Naive thymus-derived CD4-positive, alpha-beta T cell (primary cell): ENCODE measurements at regions of chr12 and their contacts with region 1.

Region 1: GRCh38 chr12:131949431-131950181 is at the start of gene EP400:
- DNase-seq: peak; percentile 78 to 95 (median 86)
- ATAC-seq: peak; percentile 97
- H3K4me3 ChIP-seq: peak within 1 kb of the TSS; percentile 78
- H3K4me3 Mint-ChIP-seq: peak within 1 kb of the TSS; percentile 80 to 93 (median 91)
- H3K27ac ChIP-seq: peak within 1 kb of the TSS; percentile 84
- H3K27ac Mint-ChIP-seq: peak within 1 kb of the TSS; percentile 88 to 95 (median 91)
- H3K4me1 ChIP-seq: peaks cover 7 to 16% of the 10 kb centered on the region in 2 donors
- H3K4me1 Mint-ChIP-seq: peaks cover 29 to 48% (median 32%) of the 10 kb centered on the region in 7 donors
- H3K27me3 ChIP-seq: no peaks in the 10 kb centered on the region
- H3K27me3 Mint-ChIP-seq: no peaks in the 10 kb centered on the region
- total RNA-seq, gene EP400: 62.2 to 86.8 (median 82.6) TPM

Region 2: GRCh38 chr12:131608740-131609690 is 340.6 kb before region 1 on chr12:
- CTCF ChIA-PET with region 1: no interaction called
- POLR2A ChIA-PET with region 1: no interaction called
- intact Hi-C with region 1: loop called (anchors 5 to 10 kb)
- DNase-seq: peak in 8 of 9 donors; percentile 31 to 64 (median 52)
- ATAC-seq: peak; percentile 80
- H3K4me3 ChIP-seq: no peak overlapping the region
- H3K4me3 Mint-ChIP-seq: peak overlapping the region in 3 of 10 donors; percentile 13 to 49 (median 29)
- H3K27ac ChIP-seq: no peak overlapping the region
- H3K27ac Mint-ChIP-seq: peak overlapping the region in 3 of 9 donors; percentile 38 to 79 (median 72)
- H3K4me1 ChIP-seq: peaks cover 38 to 49% of the 10 kb centered on the region in 2 donors
- H3K4me1 Mint-ChIP-seq: peaks cover 28 to 55% (median 47%) of the 10 kb centered on the region in 7 donors
- H3K27me3 ChIP-seq: no peaks in the 10 kb centered on the region
- H3K27me3 Mint-ChIP-seq: peaks cover 0 to 2% (median 0%) of the 10 kb centered on the region in 5 donors

Region 3: DNA sequence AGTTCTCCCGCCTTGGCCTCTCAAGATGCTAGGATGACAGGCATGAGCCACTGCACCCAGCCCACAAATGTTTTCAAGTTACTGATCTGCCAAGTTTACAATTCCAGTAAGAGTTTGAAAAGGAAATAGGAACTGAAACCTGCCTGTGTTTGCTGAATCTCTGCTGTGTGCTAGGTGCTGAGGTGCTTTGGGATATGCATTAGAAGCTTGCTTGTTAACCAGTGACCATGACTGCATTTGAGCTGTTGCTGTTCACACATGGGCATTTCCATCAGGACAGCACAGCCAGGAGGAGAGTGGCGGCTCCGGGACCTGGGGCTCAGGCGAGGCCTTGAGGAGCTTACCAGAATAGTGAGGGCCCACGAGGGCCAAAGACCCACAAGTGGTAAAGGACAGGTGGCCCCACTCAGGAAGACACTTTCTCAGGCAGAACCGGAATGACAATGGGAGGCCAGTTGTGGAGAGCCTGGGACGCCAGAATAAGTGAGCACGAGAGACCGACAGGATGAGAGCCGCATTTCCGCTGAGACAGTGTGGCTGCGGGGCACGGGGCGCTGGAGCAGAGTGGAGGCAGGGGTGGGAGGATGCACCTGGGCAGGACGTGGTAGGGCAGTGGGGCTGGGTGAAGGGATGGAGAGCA is 175.9 kb before region 1 on chr12:
- CTCF ChIA-PET with region 1: no interaction called
- POLR2A ChIA-PET with region 1: no interaction called
- intact Hi-C with region 1: loop called in 1 of 2 experiments (anchors 5 kb)
- DNase-seq: peak in 6 of 9 donors; percentile 4 to 34 (median 20)
- ATAC-seq: peak; percentile 67
- H3K4me3 ChIP-seq: no peak overlapping the region
- H3K4me3 Mint-ChIP-seq: peak overlapping the region in 9 of 10 donors; percentile 2 to 71 (median 55)
- H3K27ac ChIP-seq: peak overlapping the region; percentile 47
- H3K27ac Mint-ChIP-seq: peak overlapping the region; percentile 70 to 95 (median 84)
- H3K4me1 ChIP-seq: peaks cover 0 to 4% of the 10 kb centered on the region in 2 donors
- H3K4me1 Mint-ChIP-seq: peaks cover 18 to 40% (median 38%) of the 10 kb centered on the region in 7 donors
- H3K27me3 ChIP-seq: no peaks in the 10 kb centered on the region
- H3K27me3 Mint-ChIP-seq: no peaks in the 10 kb centered on the region

Region 4: DNA sequence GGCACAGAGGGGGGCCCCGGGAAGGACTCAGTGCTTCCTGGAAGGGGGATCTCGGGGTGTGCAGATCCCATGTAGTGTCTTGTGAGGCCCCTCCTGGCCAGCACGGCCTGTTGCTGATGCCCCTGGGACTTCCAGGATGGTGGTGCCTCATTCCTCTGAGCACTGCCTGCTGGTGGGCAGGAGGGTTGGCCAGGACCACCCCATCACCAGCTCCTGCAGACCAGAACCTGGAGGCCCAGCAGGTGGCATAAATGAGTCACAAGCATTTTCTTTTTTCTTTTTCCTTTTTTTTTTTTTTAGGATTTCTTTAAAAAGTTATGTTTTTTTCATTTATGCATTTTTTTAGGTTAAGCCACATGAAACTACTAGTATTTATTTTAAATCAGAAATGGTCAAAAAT is 113.4 kb before region 1 on chr12:
- CTCF ChIA-PET with region 1: no interaction called
- POLR2A ChIA-PET with region 1: no interaction called
- intact Hi-C with region 1: loop called (anchors 1 to 5 kb)
- DNase-seq: no peak
- ATAC-seq: no peak
- H3K4me3 ChIP-seq: no peak overlapping the region
- H3K4me3 Mint-ChIP-seq: no peak overlapping the region
- H3K27ac ChIP-seq: no peak overlapping the region
- H3K27ac Mint-ChIP-seq: no peak overlapping the region
- H3K4me1 ChIP-seq: peaks cover 0 to under 1% of the 10 kb centered on the region in 2 donors
- H3K4me1 Mint-ChIP-seq: peaks cover 0 to 3% (median under 1%) of the 10 kb centered on the region in 7 donors
- H3K27me3 ChIP-seq: no peaks in the 10 kb centered on the region
- H3K27me3 Mint-ChIP-seq: peaks cover 7 to 19% (median 9%) of the 10 kb centered on the region in 5 donors

Region 5: GRCh38 chr12:131928711-131929580 is 20.7 kb before region 1 on chr12 and contains the start of gene PUS1:
- CTCF ChIA-PET with region 1: interaction called, 3 read pairs
- POLR2A ChIA-PET with region 1: interaction called, 9 read pairs
- intact Hi-C with region 1: loop called (anchors 1 kb)
- DNase-seq: peak; percentile 84 to 95 (median 93)
- ATAC-seq: peak; percentile 95
- H3K4me3 ChIP-seq: peak within 1 kb of the TSS; percentile 75
- H3K4me3 Mint-ChIP-seq: peak within 1 kb of the TSS; percentile 87 to 100 (median 92)
- H3K27ac ChIP-seq: peak within 1 kb of the TSS; percentile 89
- H3K27ac Mint-ChIP-seq: peak within 1 kb of the TSS; percentile 79 to 97 (median 88)
- H3K4me1 ChIP-seq: no peaks in the 10 kb centered on the region
- H3K4me1 Mint-ChIP-seq: peaks cover 13 to 28% (median 25%) of the 10 kb centered on the region in 7 donors
- H3K27me3 ChIP-seq: no peaks in the 10 kb centered on the region
- H3K27me3 Mint-ChIP-seq: no peaks in the 10 kb centered on the region
- total RNA-seq, gene PUS1: 23.4 to 54.9 (median 49.2) TPM

Region 6: DNA sequence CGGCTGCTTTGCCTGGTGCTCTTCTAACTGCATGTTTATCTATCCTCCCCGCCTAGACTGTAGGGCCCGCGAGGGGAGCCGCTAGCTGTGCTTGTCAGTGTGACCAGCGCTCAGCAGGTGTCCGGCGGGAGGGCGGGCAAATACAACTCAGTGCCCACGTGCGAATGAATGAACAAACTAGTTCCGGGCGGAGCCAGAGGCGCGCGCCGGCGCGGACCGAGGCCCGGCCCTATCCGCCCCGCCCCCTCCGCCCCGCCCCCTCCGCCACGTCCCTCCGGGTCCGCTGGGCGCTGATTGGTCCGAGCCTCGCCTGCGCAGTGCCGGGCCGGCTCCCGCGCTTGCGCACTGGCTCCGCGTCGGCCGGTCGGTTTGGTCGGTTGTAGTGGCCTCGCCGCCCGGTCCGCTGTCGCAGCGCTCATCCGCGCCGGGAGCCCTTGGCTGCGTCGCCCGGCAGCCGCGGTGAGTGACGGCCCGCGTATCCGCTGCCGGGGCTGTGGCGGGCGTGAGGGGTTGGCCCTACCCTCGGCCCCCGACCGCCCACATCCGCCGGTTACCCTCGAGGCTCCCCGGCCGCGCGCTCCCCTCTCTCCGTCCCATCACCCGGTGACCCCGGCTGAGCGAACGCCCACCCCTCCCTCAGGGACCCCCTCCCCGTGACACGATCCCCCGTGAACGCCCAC is 134.5 kb after region 1 on chr12:
- CTCF ChIA-PET with region 1: no interaction called
- POLR2A ChIA-PET with region 1: no interaction called
- intact Hi-C with region 1: loop called in 1 of 2 experiments (anchors 10 kb)
- DNase-seq: peak; percentile 75 to 93 (median 83)
- ATAC-seq: peak; percentile 97
- H3K4me3 ChIP-seq: peak overlapping the region; percentile 52
- H3K4me3 Mint-ChIP-seq: peak overlapping the region; percentile 85 to 98 (median 91)
- H3K27ac ChIP-seq: peak overlapping the region; percentile 89
- H3K27ac Mint-ChIP-seq: peak overlapping the region in 8 of 9 donors; percentile 74 to 93 (median 88)
- H3K4me1 ChIP-seq: peaks cover 9 to 10% of the 10 kb centered on the region in 2 donors
- H3K4me1 Mint-ChIP-seq: peaks cover 17 to 35% (median 28%) of the 10 kb centered on the region in 7 donors
- H3K27me3 ChIP-seq: no peaks in the 10 kb centered on the region
- H3K27me3 Mint-ChIP-seq: no peaks in the 10 kb centered on the region

Region 7: GRCh38 chr12:132414634-132415326 is 465.2 kb after region 1 on chr12:
- CTCF ChIA-PET with region 1: no interaction called
- POLR2A ChIA-PET with region 1: no interaction called
- intact Hi-C with region 1: no loop called
- DNase-seq: peak; percentile 54 to 82 (median 68)
- ATAC-seq: peak; percentile 92
- H3K4me3 ChIP-seq: no peak overlapping the region
- H3K4me3 Mint-ChIP-seq: peak overlapping the region in 4 of 10 donors; percentile 25 to 43 (median 35)
- H3K27ac ChIP-seq: no peak overlapping the region
- H3K27ac Mint-ChIP-seq: no peak overlapping the region
- H3K4me1 ChIP-seq: peaks cover 5 to 15% of the 10 kb centered on the region in 2 donors
- H3K4me1 Mint-ChIP-seq: peaks cover 0 to 5% (median 3%) of the 10 kb centered on the region in 7 donors
- H3K27me3 ChIP-seq: no peaks in the 10 kb centered on the region
- H3K27me3 Mint-ChIP-seq: peaks cover 0 to 9% (median 0%) of the 10 kb centered on the region in 5 donors